ENCODE measurements at regions of chr2 and their contacts with region 1.

Region 1: GRCh38 chr2:110755491-110756078 is 23.2 kb downstream of the ACOXL start:
- DNase-seq: no peak
- H3K4me3 ChIP-seq: no peak overlapping the region
- H3K27ac ChIP-seq: no peak overlapping the region
- H3K4me1 ChIP-seq: peaks cover 0 to 5% (median 0%) of the 10 kb centered on the region in 4 donors
- H3K27me3 ChIP-seq: peaks cover 0 to 7% (median 0%) of the 10 kb centered on the region in 4 donors
- CTCF ChIP-seq: peak; percentile 50 to 71 (median 64)
- EP300 ChIP-seq: no peak
- POLR2A ChIP-seq: no peak

Region 2: DNA sequence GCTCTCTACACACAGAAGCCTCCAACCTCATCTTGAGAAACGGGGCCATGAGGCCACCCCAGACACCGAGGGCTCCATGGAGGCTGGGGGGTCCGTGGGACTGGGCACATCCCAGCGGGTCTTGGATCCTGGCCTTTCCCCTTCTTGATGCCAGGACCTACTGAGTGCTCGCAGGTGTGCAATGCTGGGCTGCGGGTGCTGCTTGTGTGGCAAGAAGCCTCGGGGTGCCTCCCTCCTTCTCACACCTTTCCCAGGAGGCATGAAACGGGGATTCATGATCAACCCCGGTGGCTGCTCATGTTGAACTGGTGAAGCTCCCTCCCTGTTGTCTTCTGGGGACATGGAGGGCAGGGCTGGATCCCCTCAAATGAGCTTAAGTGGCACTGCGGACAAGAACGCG is 75.7 kb before region 1 on chr2:
- intact Hi-C with region 1: loop called (anchors 5 kb)
- DNase-seq: no peak
- H3K4me3 ChIP-seq: peak overlapping the region in 1 of 4 donors; percentile 74
- H3K27ac ChIP-seq: no peak overlapping the region
- H3K4me1 ChIP-seq: peaks cover 7 to 21% (median 18%) of the 10 kb centered on the region in 4 donors
- H3K27me3 ChIP-seq: no peaks in the 10 kb centered on the region
- CTCF ChIP-seq: no peak
- EP300 ChIP-seq: no peak
- POLR2A ChIP-seq: no peak

Region 3: DNA sequence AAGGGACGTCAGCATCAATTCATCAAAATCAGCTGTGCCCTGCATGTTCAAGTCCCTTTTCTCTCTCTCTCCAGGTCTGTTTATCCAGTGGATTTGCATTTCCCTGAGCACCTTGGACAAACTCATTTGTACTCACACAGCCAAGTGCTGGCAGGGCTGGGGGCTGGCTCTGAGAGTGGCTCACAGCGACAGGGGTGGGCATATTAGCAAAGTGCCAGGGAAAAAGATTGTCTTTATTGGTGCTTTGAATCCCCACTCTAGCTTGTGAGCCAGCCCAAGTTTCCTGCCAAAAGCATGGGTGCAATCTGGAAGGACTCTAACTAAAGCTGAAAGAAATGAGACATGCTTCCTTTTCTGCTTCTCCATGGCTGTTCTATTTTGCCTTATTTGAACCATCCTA is 33.4 kb after region 1 on chr2:
- intact Hi-C with region 1: no loop called
- DNase-seq: no peak
- H3K4me3 ChIP-seq: no peak overlapping the region
- H3K27ac ChIP-seq: no peak overlapping the region
- H3K4me1 ChIP-seq: no peaks in the 10 kb centered on the region
- H3K27me3 ChIP-seq: peaks cover 0 to 27% (median 0%) of the 10 kb centered on the region in 4 donors
- CTCF ChIP-seq: no peak
- EP300 ChIP-seq: no peak
- POLR2A ChIP-seq: no peak

Region 4: GRCh38 chr2:112204411-112204810 is 1448.8 kb after region 1 on chr2:
- intact Hi-C with region 1: no loop called
- DNase-seq: no peak
- H3K4me3 ChIP-seq: no peak overlapping the region
- H3K27ac ChIP-seq: no peak overlapping the region
- H3K4me1 ChIP-seq: no peaks in the 10 kb centered on the region
- H3K27me3 ChIP-seq: no peaks in the 10 kb centered on the region
- CTCF ChIP-seq: no peak
- EP300 ChIP-seq: no peak
- POLR2A ChIP-seq: no peak

Measured in esophagus muscularis mucosa (tissue), 4 donors.